ENCODE measurements at regions of chr17 and their contacts with region 1.

Region 1: GRCh38 chr17:50177983-50178834 is 12.4 kb downstream of the SGCA start:
- DNase-seq: peak; percentile 98
- H3K4me3 Mint-ChIP-seq: peak overlapping the region; percentile 15
- H3K27ac Mint-ChIP-seq: peak overlapping the region; percentile 52
- H3K4me1 Mint-ChIP-seq: peaks cover 42% of the 10 kb centered on the region
- H3K27me3 Mint-ChIP-seq: no peaks in the 10 kb centered on the region
- CTCF ChIP-seq: peak; percentile 33

Region 2: DNA sequence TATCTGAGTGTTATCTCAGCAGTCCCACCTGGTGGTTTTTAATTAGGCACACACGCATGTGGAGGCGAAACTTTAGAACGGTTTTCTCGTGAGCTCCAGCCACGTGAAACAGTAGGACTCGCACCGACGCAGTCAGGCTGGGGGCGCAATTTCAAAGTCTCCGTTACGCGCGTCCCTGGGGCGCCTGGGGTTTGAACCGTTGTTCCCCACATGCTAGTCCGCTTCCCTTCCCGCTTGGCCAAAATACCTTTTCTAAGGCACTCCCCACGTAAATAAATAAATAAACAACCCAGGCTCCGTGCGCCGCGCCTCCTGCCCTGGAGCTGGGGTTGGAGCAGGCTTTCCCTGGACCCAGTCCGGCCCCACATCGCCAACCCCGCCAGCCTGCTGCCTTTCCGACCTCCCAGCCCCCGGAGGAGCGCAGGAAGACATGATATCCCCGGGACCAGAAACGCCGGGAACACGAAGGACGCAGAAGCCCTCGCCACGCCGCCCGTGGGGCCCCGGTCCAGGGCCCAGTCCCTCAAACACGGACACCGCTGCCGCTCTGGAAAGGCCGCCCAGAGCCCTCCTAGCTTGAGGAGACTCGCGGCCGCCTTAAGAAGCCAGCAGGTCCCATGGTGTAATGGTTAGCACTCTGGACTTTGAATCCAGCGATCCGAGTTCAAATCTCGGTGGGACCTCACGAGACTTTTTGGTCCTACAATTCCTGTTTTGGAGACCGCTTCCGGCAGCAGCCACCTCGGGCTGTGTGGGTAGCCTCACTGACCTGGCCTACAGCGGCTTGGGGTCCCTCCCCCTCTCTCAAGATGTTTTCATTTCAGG is 986.1 kb before region 1 on chr17:
- CTCF ChIA-PET with region 1: no interaction called
- POLR2A ChIA-PET with region 1: no interaction called
- intact Hi-C with region 1: no loop called
- DNase-seq: peak; percentile 93
- H3K4me3 Mint-ChIP-seq: peak overlapping the region; percentile 96
- H3K27ac Mint-ChIP-seq: peak overlapping the region; percentile 96
- H3K4me1 Mint-ChIP-seq: no peaks in the 10 kb centered on the region
- H3K27me3 Mint-ChIP-seq: no peaks in the 10 kb centered on the region
- CTCF ChIP-seq: peak; percentile 21

Region 3: DNA sequence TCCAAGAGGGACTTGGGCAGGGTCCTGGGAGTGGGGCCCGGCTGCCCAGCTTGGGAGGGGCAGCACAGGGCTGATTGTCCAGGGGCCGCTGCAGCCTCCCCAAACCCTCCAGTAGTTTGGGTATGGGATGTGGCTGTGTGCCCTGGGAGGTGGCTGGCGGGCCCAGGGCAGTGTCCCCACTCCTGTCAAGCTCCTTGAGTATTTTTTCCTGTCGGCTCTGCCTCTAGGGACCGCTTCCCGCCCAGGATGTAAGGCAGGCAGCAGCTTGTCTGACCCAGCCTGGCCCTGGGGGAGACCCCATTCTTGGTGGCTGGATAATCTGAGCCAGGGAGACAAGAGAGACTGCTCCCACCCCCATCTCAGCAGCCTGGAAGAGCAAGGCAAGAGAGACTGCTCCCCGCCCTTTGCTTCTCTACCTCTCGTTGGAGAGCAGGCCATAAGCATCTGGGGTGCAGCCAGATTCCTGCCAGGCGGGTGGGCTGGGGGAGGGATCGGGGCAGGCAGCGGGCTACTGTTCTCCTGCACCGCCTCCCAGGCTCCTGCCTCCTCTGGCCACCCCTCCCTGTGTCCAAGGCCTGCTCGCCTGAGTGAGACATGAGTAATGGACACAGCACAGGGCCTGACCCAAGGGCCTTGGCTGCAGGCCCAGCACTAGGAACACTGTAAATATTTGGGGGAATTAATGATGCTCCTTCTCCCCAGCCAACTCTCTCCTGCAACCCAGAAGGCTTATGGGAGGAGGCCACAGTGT is 140.7 kb before region 1 on chr17:
- CTCF ChIA-PET with region 1: no interaction called
- POLR2A ChIA-PET with region 1: no interaction called
- intact Hi-C with region 1: no loop called
- DNase-seq: peak; percentile 93
- H3K4me3 Mint-ChIP-seq: no peak overlapping the region
- H3K27ac Mint-ChIP-seq: peak overlapping the region; percentile 84
- H3K4me1 Mint-ChIP-seq: peaks cover 27% of the 10 kb centered on the region
- H3K27me3 Mint-ChIP-seq: no peaks in the 10 kb centered on the region
- CTCF ChIP-seq: no peak

Region 4: GRCh38 chr17:50194934-50195865 is 17.0 kb after region 1 on chr17:
- CTCF ChIA-PET with region 1: interaction called, 29 read pairs
- POLR2A ChIA-PET with region 1: interaction called, 11 read pairs
- intact Hi-C with region 1: no loop called
- DNase-seq: no peak
- H3K4me3 Mint-ChIP-seq: no peak overlapping the region
- H3K27ac Mint-ChIP-seq: no peak overlapping the region
- H3K4me1 Mint-ChIP-seq: peaks cover 10% of the 10 kb centered on the region
- H3K27me3 Mint-ChIP-seq: no peaks in the 10 kb centered on the region
- CTCF ChIP-seq: no peak

Region 5: GRCh38 chr17:50225693-50226240 is 47.6 kb after region 1 on chr17:
- CTCF ChIA-PET with region 1: no interaction called
- POLR2A ChIA-PET with region 1: no interaction called
- intact Hi-C with region 1: no loop called
- DNase-seq: no peak
- H3K4me3 Mint-ChIP-seq: no peak overlapping the region
- H3K27ac Mint-ChIP-seq: no peak overlapping the region
- H3K4me1 Mint-ChIP-seq: peaks cover 17% of the 10 kb centered on the region
- H3K27me3 Mint-ChIP-seq: no peaks in the 10 kb centered on the region
- CTCF ChIP-seq: no peak

Measured in MCF 10A (cell line).